ENCODE measurements at regions of chr1 and their contacts with region 1.

Region 1: DNA sequence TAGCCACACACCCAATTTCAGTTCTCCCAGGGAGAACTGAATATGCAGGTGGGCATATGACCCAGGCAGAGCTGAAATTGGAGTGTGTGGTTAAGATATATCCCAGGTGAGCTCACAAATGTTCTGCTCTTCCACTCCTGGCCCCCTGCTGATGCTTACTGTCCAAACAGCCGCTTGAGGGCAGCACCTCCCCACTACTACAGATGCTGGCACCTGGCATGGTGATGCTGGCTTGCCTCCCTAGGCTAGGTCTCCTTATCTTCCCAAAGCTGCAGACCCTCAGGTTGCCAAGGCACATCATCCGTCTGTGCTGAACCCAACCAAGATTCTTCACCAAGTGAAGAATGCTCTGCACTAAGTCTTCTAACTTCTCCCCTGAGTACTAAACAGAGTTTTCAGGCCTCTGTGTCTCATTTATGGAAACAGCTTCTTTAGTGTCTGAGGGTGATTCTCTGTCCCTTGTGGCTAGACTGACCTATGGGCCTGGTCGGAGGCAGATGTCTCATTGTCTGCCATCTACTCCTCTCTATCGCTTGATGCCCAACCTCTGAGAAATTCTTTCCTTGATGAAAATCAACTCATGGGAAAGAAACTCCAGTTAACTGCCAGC is 27.2 kb downstream of the XCL1 start:
- DNase-seq: peak; percentile 47 to 71
- H3K4me3 ChIP-seq: no peak overlapping the region
- H3K27ac ChIP-seq: no peak overlapping the region
- H3K4me1 ChIP-seq: 0 out of 2 replicates have a peak, but pooled peaks cover 5% of the 10 kb centered on the region
- H3K27me3 ChIP-seq: no peaks in the 10 kb centered on the region
- CTCF ChIP-seq: peak; percentile 95

Region 2: GRCh38 chr1:169060906-169061639 is 457.5 kb after region 1 on chr1:
- CTCF ChIA-PET with region 1: no interaction called
- POLR2A ChIA-PET with region 1: no interaction called
- intact Hi-C with region 1: loop called (anchors 5 kb)
- DNase-seq: peak in 1 of 2 experiments; percentile 81
- H3K4me3 ChIP-seq: peak overlapping the region; percentile 27; the same call in 1 of the 2 replicates
- H3K27ac ChIP-seq: peak overlapping the region; percentile 92
- H3K4me1 ChIP-seq: peaks cover 49% of the 10 kb centered on the region
- H3K27me3 ChIP-seq: no peaks in the 10 kb centered on the region
- CTCF ChIP-seq: no peak

Region 3: GRCh38 chr1:169348383-169349036 is 744.9 kb after region 1 on chr1:
- CTCF ChIA-PET with region 1: interaction called, 28 read pairs
- POLR2A ChIA-PET with region 1: no interaction called
- intact Hi-C with region 1: loop called (anchors 1 kb)
- DNase-seq: no peak
- H3K4me3 ChIP-seq: no peak overlapping the region
- H3K27ac ChIP-seq: no peak overlapping the region
- H3K4me1 ChIP-seq: no peaks in the 10 kb centered on the region
- H3K27me3 ChIP-seq: no peaks in the 10 kb centered on the region
- CTCF ChIP-seq: peak; percentile 91

Region 4: GRCh38 chr1:169466259-169467230 is 862.9 kb after region 1 on chr1:
- CTCF ChIA-PET with region 1: no interaction called
- POLR2A ChIA-PET with region 1: no interaction called
- intact Hi-C with region 1: loop called (anchors 1 kb)
- DNase-seq: peak in 1 of 2 experiments; percentile 29
- H3K4me3 ChIP-seq: no peak overlapping the region
- H3K27ac ChIP-seq: no peak overlapping the region
- H3K4me1 ChIP-seq: no peaks in the 10 kb centered on the region
- H3K27me3 ChIP-seq: no peaks in the 10 kb centered on the region
- CTCF ChIP-seq: peak; percentile 67; the same call in 1 of the 2 replicates

Region 5: GRCh38 chr1:169546087-169546995 is 942.7 kb after region 1 on chr1:
- CTCF ChIA-PET with region 1: interaction called, 3 read pairs
- POLR2A ChIA-PET with region 1: no interaction called
- intact Hi-C with region 1: loop called (anchors 1 kb)
- DNase-seq: peak; percentile 44 to 63
- H3K4me3 ChIP-seq: no peak overlapping the region
- H3K27ac ChIP-seq: no peak overlapping the region
- H3K4me1 ChIP-seq: no peaks in the 10 kb centered on the region
- H3K27me3 ChIP-seq: no peaks in the 10 kb centered on the region
- CTCF ChIP-seq: peak; percentile 90